Caco-2 (cell line): ENCODE measurements at regions of chr10 and their contacts with region 1.

Region 1: GRCh38 chr10:49164559-49165188 is 23.5 kb downstream of the TMEM273 start:
- DNase-seq: peak in 1 of 2 experiments; percentile 68
- H3K4me3 ChIP-seq: no peak overlapping the region
- H3K4me3 Mint-ChIP-seq: no peak overlapping the region
- H3K27ac Mint-ChIP-seq: no peak overlapping the region
- H3K4me1 ChIP-seq: no peaks in the 10 kb centered on the region
- H3K4me1 Mint-ChIP-seq: no peaks in the 10 kb centered on the region
- H3K27me3 ChIP-seq: no peaks in the 10 kb centered on the region; the same call in 1 of the 2 replicates
- H3K27me3 Mint-ChIP-seq: peaks cover 24% of the 10 kb centered on the region
- CTCF ChIP-seq: peak; percentile 63 to 94

Region 2: DNA sequence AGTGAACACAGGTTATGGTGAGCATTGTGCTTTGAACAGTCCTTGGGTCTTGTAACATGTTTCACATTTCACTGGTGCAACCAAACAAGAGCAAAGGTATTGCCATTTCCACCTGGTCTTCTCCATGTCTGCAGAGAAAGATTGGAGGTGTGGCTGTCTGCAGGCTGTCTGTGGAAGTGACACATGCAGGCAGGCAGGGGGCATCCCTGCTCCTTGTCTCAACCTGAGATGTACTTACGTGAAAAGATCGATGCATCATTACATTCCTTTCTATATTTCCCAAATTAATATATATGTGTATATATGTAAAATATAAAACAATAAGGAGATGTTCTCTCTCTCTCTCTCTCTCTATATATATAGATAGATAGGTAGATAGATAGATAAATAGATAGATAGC is 279.3 kb before region 1 on chr10:
- CTCF ChIA-PET with region 1: no interaction called
- POLR2A ChIA-PET with region 1: no interaction called
- intact Hi-C with region 1: loop called (anchors 1 kb)
- DNase-seq: peak in 1 of 2 experiments; percentile 61
- H3K4me3 ChIP-seq: no peak overlapping the region
- H3K4me3 Mint-ChIP-seq: no peak overlapping the region
- H3K27ac Mint-ChIP-seq: no peak overlapping the region
- H3K4me1 ChIP-seq: no peaks in the 10 kb centered on the region
- H3K4me1 Mint-ChIP-seq: no peaks in the 10 kb centered on the region
- H3K27me3 ChIP-seq: peaks cover 2% of the 10 kb centered on the region; the same call in 1 of the 2 replicates
- H3K27me3 Mint-ChIP-seq: peaks cover 20% of the 10 kb centered on the region
- CTCF ChIP-seq: peak; percentile 70 to 80

Region 3: GRCh38 chr10:48976196-48976595 is 188.5 kb before region 1 on chr10:
- CTCF ChIA-PET with region 1: interaction called, 18 read pairs
- POLR2A ChIA-PET with region 1: no interaction called
- intact Hi-C with region 1: loop called (anchors 1 kb)
- DNase-seq: peak in 1 of 2 experiments; percentile 50
- H3K4me3 ChIP-seq: no peak overlapping the region
- H3K4me3 Mint-ChIP-seq: no peak overlapping the region
- H3K27ac Mint-ChIP-seq: no peak overlapping the region
- H3K4me1 ChIP-seq: no peaks in the 10 kb centered on the region
- H3K4me1 Mint-ChIP-seq: no peaks in the 10 kb centered on the region
- H3K27me3 ChIP-seq: no peaks in the 10 kb centered on the region
- H3K27me3 Mint-ChIP-seq: peaks cover 16% of the 10 kb centered on the region
- CTCF ChIP-seq: peak in 1 of 2 experiments; percentile 52

Region 4: DNA sequence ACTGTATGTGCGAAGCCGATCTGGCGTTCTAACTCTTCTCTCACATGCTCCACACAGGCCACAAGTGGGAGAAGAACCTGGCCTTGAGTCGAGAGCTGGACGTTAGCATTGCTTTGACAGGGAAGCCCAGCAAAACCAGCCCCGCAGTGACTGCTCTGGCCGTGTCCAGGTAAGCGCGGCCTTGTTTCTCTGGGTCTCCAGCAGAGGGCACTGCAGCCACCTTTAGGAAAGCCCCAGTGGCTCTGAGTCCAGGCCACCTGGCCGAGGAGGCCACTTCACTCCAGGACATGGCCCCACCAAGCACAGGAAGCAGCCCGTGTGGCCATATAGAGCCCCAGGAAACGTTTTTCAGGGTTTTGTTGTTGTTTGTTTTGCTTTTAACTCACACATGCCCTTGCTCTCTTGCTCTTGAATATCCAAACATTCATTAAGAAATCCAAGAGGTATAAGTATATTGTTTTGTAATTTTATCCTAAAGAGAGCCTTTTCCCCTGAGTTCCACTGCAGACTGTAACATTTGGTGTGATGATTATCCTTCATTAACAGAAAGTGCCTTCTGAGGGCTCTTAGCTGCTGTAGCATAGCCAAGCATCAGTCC is 183.3 kb before region 1 on chr10:
- CTCF ChIA-PET with region 1: interaction called, 18 read pairs
- POLR2A ChIA-PET with region 1: no interaction called
- intact Hi-C with region 1: loop called (anchors 1 kb)
- DNase-seq: peak; percentile 75 to 80
- H3K4me3 ChIP-seq: no peak overlapping the region
- H3K4me3 Mint-ChIP-seq: no peak overlapping the region
- H3K27ac Mint-ChIP-seq: no peak overlapping the region
- H3K4me1 ChIP-seq: no peaks in the 10 kb centered on the region
- H3K4me1 Mint-ChIP-seq: no peaks in the 10 kb centered on the region
- H3K27me3 ChIP-seq: no peaks in the 10 kb centered on the region
- H3K27me3 Mint-ChIP-seq: peaks cover 18% of the 10 kb centered on the region
- CTCF ChIP-seq: peak; percentile 87 to 93

Region 5: DNA sequence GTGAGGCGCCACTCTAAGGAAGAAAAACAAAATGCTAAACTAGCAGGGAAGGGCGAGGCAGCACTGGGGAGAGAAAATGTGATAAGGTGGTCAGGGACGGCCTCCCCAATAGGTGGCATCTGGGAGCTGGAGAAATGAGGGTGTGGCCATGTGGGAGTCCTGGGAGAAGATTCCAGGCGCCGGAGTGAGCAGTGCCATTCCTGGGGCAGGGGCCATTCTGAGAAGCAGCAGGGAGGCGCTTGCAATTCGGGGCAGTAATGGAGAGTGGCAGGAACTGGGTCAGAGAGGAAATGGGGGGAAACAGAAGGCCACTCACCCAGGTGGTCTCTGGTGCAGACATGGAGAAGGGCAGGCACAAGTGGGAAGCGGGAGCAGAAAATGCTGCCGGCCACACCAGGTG is 163.3 kb before region 1 on chr10:
- CTCF ChIA-PET with region 1: interaction called, 8 read pairs
- POLR2A ChIA-PET with region 1: no interaction called
- intact Hi-C with region 1: loop called (anchors 2 kb)
- DNase-seq: peak; percentile 53 to 59
- H3K4me3 ChIP-seq: no peak overlapping the region
- H3K4me3 Mint-ChIP-seq: no peak overlapping the region
- H3K27ac Mint-ChIP-seq: no peak overlapping the region
- H3K4me1 ChIP-seq: no peaks in the 10 kb centered on the region
- H3K4me1 Mint-ChIP-seq: peaks cover 8% of the 10 kb centered on the region
- H3K27me3 ChIP-seq: no peaks in the 10 kb centered on the region
- H3K27me3 Mint-ChIP-seq: peaks cover 8% of the 10 kb centered on the region
- CTCF ChIP-seq: peak in 1 of 2 experiments; percentile 54

Region 6: DNA sequence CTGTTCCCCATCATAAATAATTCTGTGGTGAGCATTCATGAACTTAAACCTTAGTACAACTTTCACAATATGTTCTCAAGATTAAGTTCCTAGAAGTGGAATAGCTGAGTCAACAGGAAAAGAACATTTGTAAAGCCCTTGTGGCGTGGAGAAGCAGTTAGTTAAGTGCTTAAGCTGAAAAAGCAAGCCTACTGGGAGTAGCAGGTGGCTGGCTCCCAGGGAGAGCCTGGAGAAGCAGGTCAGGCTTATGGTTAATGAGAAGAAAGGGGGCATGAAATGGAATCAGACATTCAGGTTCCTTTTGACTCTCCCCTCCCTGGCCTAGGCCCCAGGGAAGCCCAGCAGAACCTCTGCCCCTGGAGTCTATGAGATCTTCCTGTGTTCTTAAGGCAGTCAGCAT is 84.6 kb before region 1 on chr10:
- CTCF ChIA-PET with region 1: no interaction called
- POLR2A ChIA-PET with region 1: no interaction called
- intact Hi-C with region 1: no loop called
- DNase-seq: peak in 1 of 2 experiments; percentile 9
- H3K4me3 ChIP-seq: no peak overlapping the region
- H3K4me3 Mint-ChIP-seq: no peak overlapping the region
- H3K27ac Mint-ChIP-seq: no peak overlapping the region
- H3K4me1 ChIP-seq: no peaks in the 10 kb centered on the region
- H3K4me1 Mint-ChIP-seq: peaks cover 6% of the 10 kb centered on the region
- H3K27me3 ChIP-seq: peaks cover 1% of the 10 kb centered on the region
- H3K27me3 Mint-ChIP-seq: peaks cover 20% of the 10 kb centered on the region
- CTCF ChIP-seq: no peak

Region 7: DNA sequence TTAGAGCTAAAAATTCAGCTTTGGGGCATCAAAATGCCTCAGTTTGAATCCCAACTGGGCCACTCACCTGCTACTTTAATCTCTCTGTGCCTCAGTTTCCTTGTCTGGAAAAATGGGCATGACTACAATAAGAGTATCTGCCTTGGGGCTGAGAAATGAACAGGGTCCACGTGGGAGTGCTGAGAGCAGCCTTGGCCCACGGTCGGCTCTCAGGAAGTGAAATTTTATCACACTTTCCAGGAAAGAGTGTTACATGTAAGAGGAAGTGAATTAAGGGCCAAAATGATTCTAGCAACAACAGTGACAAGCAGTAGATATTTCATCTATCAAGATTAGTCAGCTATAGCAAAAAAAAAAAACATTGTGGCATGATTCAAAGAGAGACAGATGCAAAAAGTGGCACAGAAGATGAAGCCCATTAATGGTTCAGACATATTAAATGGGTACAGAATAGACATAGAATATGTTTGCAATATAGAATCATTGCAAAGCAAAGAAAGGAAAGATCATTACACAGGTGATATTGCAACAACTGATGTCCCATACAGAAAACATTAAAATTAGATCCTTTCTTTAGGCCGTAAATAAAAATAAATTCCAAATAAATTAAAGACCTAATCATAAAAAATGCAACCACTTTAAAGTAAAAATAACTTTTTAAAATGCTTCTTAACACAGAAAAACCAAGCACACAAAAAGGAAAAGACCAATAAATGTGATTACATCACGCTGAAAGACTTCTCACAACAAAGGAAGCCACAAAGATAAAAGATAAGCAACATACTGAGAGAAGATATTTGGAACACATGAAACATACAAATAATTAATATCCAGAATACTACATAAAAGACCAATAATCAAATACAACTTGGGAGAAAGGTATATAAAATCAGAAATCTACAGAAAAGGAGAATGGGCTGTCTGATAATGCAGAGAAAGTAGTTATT is 19.2 kb after region 1 on chr10:
- CTCF ChIA-PET with region 1: no interaction called
- POLR2A ChIA-PET with region 1: no interaction called
- intact Hi-C with region 1: no loop called
- DNase-seq: no peak
- H3K4me3 ChIP-seq: no peak overlapping the region
- H3K4me3 Mint-ChIP-seq: no peak overlapping the region
- H3K27ac Mint-ChIP-seq: no peak overlapping the region
- H3K4me1 ChIP-seq: no peaks in the 10 kb centered on the region
- H3K4me1 Mint-ChIP-seq: no peaks in the 10 kb centered on the region
- H3K27me3 ChIP-seq: peaks cover 2% of the 10 kb centered on the region; the same call in 1 of the 2 replicates
- H3K27me3 Mint-ChIP-seq: peaks cover 32% of the 10 kb centered on the region
- CTCF ChIP-seq: no peak